ENCODE measurements at regions of chr9 and their contacts with region 1.

Region 1: DNA sequence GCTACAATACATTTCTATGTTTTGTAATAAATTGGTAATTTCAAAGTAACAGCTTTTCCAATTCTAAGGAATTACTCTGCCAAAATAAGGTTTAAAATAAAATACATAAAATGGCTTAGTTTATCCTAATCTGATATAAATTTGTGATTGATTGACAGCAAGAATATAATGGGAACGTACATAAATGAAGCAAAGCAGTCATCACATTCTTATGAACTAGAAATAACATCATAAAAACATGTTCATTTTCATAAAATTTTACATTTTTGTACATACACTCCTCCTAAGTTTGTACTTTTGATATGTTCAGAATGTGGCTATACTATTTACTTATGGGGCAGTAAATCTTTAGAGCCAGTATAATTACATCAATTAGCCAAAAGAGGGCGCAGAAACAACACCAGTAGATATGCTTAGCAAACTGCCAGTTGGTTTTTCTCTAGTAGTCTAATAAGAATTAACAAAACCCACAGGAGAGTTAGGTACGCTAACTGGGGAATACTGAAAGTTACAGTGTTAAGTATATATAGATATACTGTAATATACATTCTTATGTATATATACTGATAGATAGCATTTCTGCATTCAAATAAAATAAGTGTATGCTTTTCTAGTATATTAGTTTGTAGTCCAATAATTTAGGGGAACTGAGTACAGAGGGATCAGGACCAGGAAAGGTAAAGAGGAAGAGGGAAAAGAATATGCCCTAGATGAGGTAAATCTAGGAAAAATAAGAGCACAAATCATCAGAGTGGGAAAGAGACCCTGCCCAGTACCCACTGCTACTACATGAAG is 76.8 kb downstream of the ZDHHC21 start:
- DNase-seq: peak; percentile 62 to 84 (median 82)
- H3K4me3 ChIP-seq: no peak overlapping the region
- H3K27ac ChIP-seq: no peak overlapping the region
- H3K4me1 ChIP-seq: peaks cover 0 to 6% (median 0%) of the 10 kb centered on the region in 4 experiments
- H3K27me3 ChIP-seq: no peaks in the 10 kb centered on the region

Region 2: GRCh38 chr9:14547245-14548060 is 68.9 kb before region 1 on chr9:
- CTCF ChIA-PET with region 1: no interaction called
- POLR2A ChIA-PET with region 1: no interaction called
- DNase-seq: no peak
- H3K4me3 ChIP-seq: no peak overlapping the region
- H3K27ac ChIP-seq: no peak overlapping the region
- H3K4me1 ChIP-seq: no peaks in the 10 kb centered on the region
- H3K27me3 ChIP-seq: no peaks in the 10 kb centered on the region

Region 3: DNA sequence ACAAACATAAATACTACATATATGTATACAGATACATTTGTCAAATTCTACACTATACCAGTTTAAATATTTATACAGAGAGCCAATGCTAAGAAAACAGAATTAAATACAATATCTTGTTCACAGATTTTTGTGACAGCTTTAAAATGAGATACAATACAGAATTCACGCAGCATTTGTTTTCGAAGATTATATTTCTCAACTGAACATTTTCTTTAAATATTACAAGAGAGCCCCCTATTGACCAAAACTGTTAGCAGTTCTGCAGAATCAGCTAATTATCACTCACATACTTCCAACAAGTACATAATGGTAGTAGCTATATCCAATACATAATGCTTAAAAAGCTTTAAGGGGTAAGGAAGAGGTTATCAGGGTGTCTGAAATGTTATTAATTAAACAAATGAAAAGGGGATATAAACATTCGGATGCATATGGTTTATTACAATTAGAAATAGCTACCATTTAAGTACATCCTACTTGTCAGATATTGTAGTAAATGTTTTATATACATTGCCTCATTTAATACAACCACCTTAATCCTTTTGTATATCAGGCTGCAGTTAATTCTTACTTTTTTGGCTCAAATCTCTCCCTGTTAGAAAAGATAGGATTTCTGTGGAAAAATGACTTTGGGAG is 45.2 kb after region 1 on chr9:
- CTCF ChIA-PET with region 1: interaction called, 16 read pairs
- POLR2A ChIA-PET with region 1: no interaction called
- DNase-seq: peak; percentile 25 to 56 (median 48)
- H3K4me3 ChIP-seq: no peak overlapping the region
- H3K27ac ChIP-seq: no peak overlapping the region
- H3K4me1 ChIP-seq: no peaks in the 10 kb centered on the region
- H3K27me3 ChIP-seq: no peaks in the 10 kb centered on the region

Region 4: DNA sequence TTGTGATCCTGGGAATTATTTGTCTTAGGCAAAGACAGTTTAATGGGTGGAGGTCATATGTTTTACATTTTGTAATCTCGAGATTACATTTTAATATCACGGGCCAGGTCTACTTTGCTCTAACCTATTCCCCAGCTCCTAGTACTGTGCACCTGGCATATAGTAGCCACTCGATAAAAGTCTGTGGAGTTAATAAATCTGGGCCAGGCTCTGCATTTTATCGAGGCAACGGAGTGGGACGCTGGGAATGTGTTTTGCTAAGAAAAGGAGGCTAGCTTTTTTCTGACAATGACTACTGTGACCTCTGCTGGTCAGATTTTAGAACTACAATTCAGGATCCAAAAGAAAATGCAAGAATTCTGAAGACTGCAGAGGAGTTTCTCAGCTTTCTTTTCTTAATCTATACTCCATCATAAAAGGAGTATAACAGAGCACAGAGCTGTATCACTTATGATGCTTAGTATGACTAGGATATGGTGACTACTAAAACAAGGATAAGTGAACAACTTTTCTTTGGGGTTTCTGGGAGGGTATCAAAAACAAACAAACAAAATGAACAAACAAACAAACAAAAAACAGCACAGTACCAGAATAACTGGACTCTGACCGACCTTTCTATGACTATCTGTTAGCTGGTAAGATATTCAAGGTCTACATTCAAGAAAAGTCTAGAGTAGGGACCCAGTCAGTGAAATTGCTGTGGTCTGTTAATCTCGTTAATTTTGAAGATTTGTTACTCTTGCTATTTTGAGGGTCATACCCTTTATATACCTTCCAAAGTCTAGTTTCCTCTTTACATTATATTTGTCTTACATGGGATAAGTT is 152.2 kb after region 1 on chr9:
- CTCF ChIA-PET with region 1: interaction called, 34 read pairs
- POLR2A ChIA-PET with region 1: no interaction called
- DNase-seq: peak; percentile 29 to 63 (median 47)
- H3K4me3 ChIP-seq: no peak overlapping the region
- H3K27ac ChIP-seq: no peak overlapping the region
- H3K4me1 ChIP-seq: no peaks in the 10 kb centered on the region
- H3K27me3 ChIP-seq: peaks cover 0 to 2% (median 0%) of the 10 kb centered on the region in 5 experiments

Region 5: GRCh38 chr9:14924899-14925235 is 308.5 kb after region 1 on chr9:
- CTCF ChIA-PET with region 1: no interaction called
- POLR2A ChIA-PET with region 1: no interaction called
- DNase-seq: peak in 2 of 3 donors; percentile 31 to 53
- H3K4me3 ChIP-seq: peak overlapping the region in 1 of 7 experiments; percentile 67
- H3K27ac ChIP-seq: no peak overlapping the region
- H3K4me1 ChIP-seq: peaks cover 3 to 33% (median 7%) of the 10 kb centered on the region in 4 experiments
- H3K27me3 ChIP-seq: no peaks in the 10 kb centered on the region

Measured in common myeloid progenitor, CD34-positive (primary cell).